Ovary (tissue), 10 donors: ENCODE measurements at regions of chrX and their contacts with region 1.

Region 1: GRCh38 chrX:57595381-57595811 is 3.6 kb downstream of the ZXDB start:
- DNase-seq: peak; percentile 36 to 58 (median 47)
- H3K4me3 ChIP-seq: no peak overlapping the region
- H3K27ac ChIP-seq: no peak overlapping the region
- H3K4me1 ChIP-seq: no peaks in the 10 kb centered on the region
- H3K27me3 ChIP-seq: no peaks in the 10 kb centered on the region
- CTCF ChIP-seq: no peak
- EP300 ChIP-seq: no peak
- POLR2A ChIP-seq: no peak

Region 2: GRCh38 chrX:57681341-57681740 is 85.9 kb after region 1 on chrX:
- intact Hi-C with region 1: no loop called
- DNase-seq: no peak
- H3K4me3 ChIP-seq: no peak overlapping the region
- H3K27ac ChIP-seq: no peak overlapping the region
- H3K4me1 ChIP-seq: no peaks in the 10 kb centered on the region
- H3K27me3 ChIP-seq: no peaks in the 10 kb centered on the region
- CTCF ChIP-seq: no peak
- EP300 ChIP-seq: no peak
- POLR2A ChIP-seq: no peak

Region 3: GRCh38 chrX:57918750-57919436 is 323.5 kb after region 1 on chrX:
- intact Hi-C with region 1: loop called in 1 of 4 experiments (anchors 5 kb)
- DNase-seq: peak in 2 of 5 donors; percentile 17 to 22
- H3K4me3 ChIP-seq: no peak overlapping the region
- H3K27ac ChIP-seq: no peak overlapping the region
- H3K4me1 ChIP-seq: no peaks in the 10 kb centered on the region
- H3K27me3 ChIP-seq: no peaks in the 10 kb centered on the region
- CTCF ChIP-seq: peak in 1 of 3 donors; percentile 11
- EP300 ChIP-seq: no peak
- POLR2A ChIP-seq: no peak